ENCODE measurements at regions of chr12 and their contacts with region 1.

Region 1: GRCh38 chr12:78181544-78182162 is 351.0 kb downstream of the NAV3 start:
- DNase-seq: peak; percentile 73
- ATAC-seq: peak; percentile 62
- H3K4me3 ChIP-seq: no peak overlapping the region
- H3K27ac ChIP-seq: no peak overlapping the region
- H3K4me1 ChIP-seq: peaks cover 30% of the 10 kb centered on the region
- H3K27me3 ChIP-seq: no peaks in the 10 kb centered on the region
- CTCF ChIP-seq: peak; percentile 89

Region 2: DNA sequence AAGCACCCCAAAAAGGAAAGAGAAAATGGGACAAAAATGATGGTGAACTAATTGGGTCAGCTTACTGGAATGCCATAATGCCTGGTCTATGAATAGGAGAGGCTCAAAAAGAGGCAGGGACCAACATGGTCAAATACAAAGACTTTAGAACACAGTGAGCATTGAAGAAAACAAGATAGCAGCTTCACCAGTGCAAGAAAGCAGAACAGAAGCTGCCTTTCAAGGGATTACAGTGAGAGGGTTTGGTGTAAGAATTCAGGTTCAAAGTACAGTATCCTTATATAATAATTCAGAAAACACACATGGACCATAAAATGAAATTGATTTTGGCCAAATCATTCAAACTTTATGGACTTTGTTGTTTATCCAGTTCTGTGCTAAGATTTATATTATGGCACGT is 188.9 kb before region 1 on chr12:
- CTCF ChIA-PET with region 1: no interaction called
- POLR2A ChIA-PET with region 1: no interaction called
- intact Hi-C with region 1: no loop called
- DNase-seq: no peak
- ATAC-seq: no peak
- H3K4me3 ChIP-seq: no peak overlapping the region
- H3K27ac ChIP-seq: no peak overlapping the region
- H3K4me1 ChIP-seq: peaks cover 11% of the 10 kb centered on the region
- H3K27me3 ChIP-seq: no peaks in the 10 kb centered on the region
- CTCF ChIP-seq: no peak

Region 3: DNA sequence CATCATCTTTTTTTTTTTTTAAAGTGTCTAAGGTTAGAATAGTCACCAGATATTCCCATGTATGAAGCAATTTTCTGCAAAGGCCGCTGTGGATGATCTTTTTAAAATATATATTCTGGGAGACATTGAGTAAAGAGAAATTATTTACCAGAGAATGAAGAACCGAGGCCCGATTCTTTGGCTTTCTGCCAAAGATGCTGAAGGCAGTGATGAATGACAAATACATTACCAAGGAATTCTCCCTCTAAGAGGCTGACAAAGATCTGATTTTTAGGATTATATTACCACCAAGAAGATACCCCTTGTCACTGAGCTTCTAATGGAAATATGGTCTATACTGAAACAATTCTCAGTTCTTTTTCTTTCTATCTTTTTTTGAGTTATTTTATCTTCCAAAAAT is 14.1 kb before region 1 on chr12:
- CTCF ChIA-PET with region 1: no interaction called
- POLR2A ChIA-PET with region 1: no interaction called
- intact Hi-C with region 1: no loop called
- DNase-seq: peak; percentile 25
- ATAC-seq: no peak
- H3K4me3 ChIP-seq: no peak overlapping the region
- H3K27ac ChIP-seq: no peak overlapping the region
- H3K4me1 ChIP-seq: no peaks in the 10 kb centered on the region
- H3K27me3 ChIP-seq: no peaks in the 10 kb centered on the region
- CTCF ChIP-seq: no peak

Region 4: GRCh38 chr12:78204926-78205325 is 23.3 kb after region 1 on chr12:
- CTCF ChIA-PET with region 1: no interaction called
- POLR2A ChIA-PET with region 1: no interaction called
- intact Hi-C with region 1: no loop called
- DNase-seq: no peak
- ATAC-seq: no peak
- H3K4me3 ChIP-seq: no peak overlapping the region
- H3K27ac ChIP-seq: no peak overlapping the region
- H3K4me1 ChIP-seq: 0 out of 2 replicates have a peak, but pooled peaks cover 7% of the 10 kb centered on the region
- H3K27me3 ChIP-seq: no peaks in the 10 kb centered on the region
- CTCF ChIP-seq: no peak

Region 5: GRCh38 chr12:78328524-78328923 is 146.9 kb after region 1 on chr12:
- CTCF ChIA-PET with region 1: no interaction called
- POLR2A ChIA-PET with region 1: no interaction called
- intact Hi-C with region 1: no loop called
- DNase-seq: no peak
- ATAC-seq: no peak
- H3K4me3 ChIP-seq: no peak overlapping the region
- H3K27ac ChIP-seq: no peak overlapping the region
- H3K4me1 ChIP-seq: no peaks in the 10 kb centered on the region
- H3K27me3 ChIP-seq: no peaks in the 10 kb centered on the region
- CTCF ChIP-seq: no peak

Region 6: GRCh38 chr12:78392918-78393317 is 211.3 kb after region 1 on chr12:
- CTCF ChIA-PET with region 1: no interaction called
- POLR2A ChIA-PET with region 1: no interaction called
- intact Hi-C with region 1: loop called (anchors 1 kb)
- DNase-seq: peak; percentile 56
- ATAC-seq: peak; percentile 62; the same call in 1 of the 2 replicates
- H3K4me3 ChIP-seq: no peak overlapping the region
- H3K27ac ChIP-seq: no peak overlapping the region
- H3K4me1 ChIP-seq: 0 out of 2 replicates have a peak, but pooled peaks cover under 1% of the 10 kb centered on the region
- H3K27me3 ChIP-seq: no peaks in the 10 kb centered on the region
- CTCF ChIP-seq: peak; percentile 63

Region 7: GRCh38 chr12:78442454-78442801 is 260.8 kb after region 1 on chr12:
- CTCF ChIA-PET with region 1: no interaction called
- POLR2A ChIA-PET with region 1: no interaction called
- intact Hi-C with region 1: loop called (anchors 5 kb)
- DNase-seq: peak; percentile 19
- ATAC-seq: peak; percentile 29
- H3K4me3 ChIP-seq: peak overlapping the region; percentile 26; the same call in 1 of the 2 replicates
- H3K27ac ChIP-seq: peak overlapping the region; percentile 75
- H3K4me1 ChIP-seq: peaks cover 37% of the 10 kb centered on the region
- H3K27me3 ChIP-seq: no peaks in the 10 kb centered on the region
- CTCF ChIP-seq: no peak

Region 8: DNA sequence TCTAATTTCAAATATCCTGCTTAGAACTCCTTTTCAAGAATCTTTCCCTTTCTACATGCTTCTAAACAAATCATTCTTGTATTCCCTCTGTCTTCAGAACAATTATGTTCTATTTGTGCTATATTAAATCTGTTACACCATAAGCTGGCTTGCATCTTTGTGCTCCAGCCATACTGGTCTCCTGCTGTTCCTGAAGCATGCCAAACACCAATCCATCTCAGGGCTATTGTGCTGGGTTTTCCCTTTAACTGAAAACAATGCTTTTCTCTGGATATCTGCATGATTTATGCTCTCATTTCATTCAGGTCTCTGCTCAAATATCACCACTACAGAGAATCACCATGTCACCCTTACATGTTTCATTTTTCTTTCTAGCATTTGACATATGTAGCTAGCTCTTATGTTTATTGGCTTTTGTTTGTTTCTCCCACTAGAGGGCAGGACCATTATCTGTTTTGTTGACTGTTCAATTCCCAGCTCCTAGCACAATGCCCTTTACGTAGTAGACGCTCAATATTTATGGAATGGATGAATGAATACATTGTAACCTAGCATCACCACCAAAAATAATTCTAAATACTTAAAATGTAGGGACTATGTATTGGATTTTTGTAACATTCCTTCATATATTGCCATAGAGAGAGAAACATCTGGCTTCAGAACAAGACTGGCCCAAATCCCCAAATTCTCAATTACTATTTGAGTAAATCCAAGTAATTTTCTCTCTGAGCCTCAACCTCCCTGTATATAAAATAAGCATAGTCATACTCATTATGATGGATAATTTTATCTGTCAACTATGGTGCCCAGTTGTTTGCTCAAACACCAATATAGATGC is 380.9 kb after region 1 on chr12:
- CTCF ChIA-PET with region 1: no interaction called
- POLR2A ChIA-PET with region 1: no interaction called
- intact Hi-C with region 1: loop called (anchors 5 kb)
- DNase-seq: peak; percentile 44
- ATAC-seq: peak; percentile 55
- H3K4me3 ChIP-seq: no peak overlapping the region
- H3K27ac ChIP-seq: no peak overlapping the region
- H3K4me1 ChIP-seq: no peaks in the 10 kb centered on the region
- H3K27me3 ChIP-seq: no peaks in the 10 kb centered on the region
- CTCF ChIP-seq: peak; percentile 72

Region 9: DNA sequence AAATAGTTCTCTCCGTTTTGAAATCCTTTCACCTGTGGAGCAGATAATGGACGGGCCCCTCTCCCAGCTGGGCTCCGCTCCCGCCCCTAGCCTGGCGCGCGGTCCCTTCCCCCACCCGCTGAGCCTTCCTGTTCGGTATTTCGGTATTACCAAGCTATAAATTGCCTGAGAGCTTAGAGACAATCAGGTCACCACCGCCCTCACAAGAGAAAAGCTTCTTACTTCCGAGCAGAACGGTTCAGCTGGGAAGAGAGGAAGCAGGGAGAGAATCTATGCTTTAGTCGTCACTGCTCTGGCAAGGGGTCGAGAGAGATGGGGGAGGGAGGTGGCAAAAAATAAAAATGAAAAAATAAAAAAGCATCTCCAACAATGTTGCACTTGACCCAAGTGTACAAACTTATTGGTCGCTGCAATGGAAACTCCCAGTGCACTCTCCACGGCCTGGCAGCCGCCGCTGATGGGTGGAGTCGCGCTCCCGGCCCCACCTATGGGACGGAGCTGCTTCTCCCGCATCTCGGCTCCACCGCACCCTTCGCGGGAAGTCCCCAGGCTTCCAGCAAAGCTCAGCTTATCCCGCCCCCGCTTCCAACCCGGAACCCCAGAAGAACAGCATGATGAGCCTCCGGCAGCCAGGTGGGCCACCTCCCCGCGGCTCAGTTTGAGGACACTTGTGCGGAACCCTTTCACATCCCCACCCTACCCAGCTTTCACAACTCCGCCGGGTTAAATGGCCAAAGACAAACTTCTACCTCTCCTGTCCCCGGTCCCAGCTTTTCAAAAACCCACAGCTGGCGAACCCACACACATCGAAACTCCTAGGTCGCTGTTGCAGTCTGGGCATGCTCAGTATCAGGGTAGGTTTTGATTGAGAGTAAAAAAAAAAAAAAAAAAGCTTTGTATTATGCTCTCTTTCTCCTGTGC is 682.1 kb after region 1 on chr12:
- CTCF ChIA-PET with region 1: no interaction called
- POLR2A ChIA-PET with region 1: no interaction called
- intact Hi-C with region 1: loop called (anchors 2 kb)
- DNase-seq: peak; percentile 53
- ATAC-seq: peak; percentile 73
- H3K4me3 ChIP-seq: peak overlapping the region; percentile 79
- H3K27ac ChIP-seq: no peak overlapping the region
- H3K4me1 ChIP-seq: no peaks in the 10 kb centered on the region
- H3K27me3 ChIP-seq: peaks cover 6% of the 10 kb centered on the region
- CTCF ChIP-seq: no peak

Region 10: GRCh38 chr12:79174626-79175025 is 993.0 kb after region 1 on chr12:
- CTCF ChIA-PET with region 1: no interaction called
- POLR2A ChIA-PET with region 1: no interaction called
- intact Hi-C with region 1: loop called (anchors 1 kb)
- DNase-seq: peak; percentile 70
- ATAC-seq: peak; percentile 83
- H3K4me3 ChIP-seq: no peak overlapping the region
- H3K27ac ChIP-seq: no peak overlapping the region
- H3K4me1 ChIP-seq: no peaks in the 10 kb centered on the region
- H3K27me3 ChIP-seq: no peaks in the 10 kb centered on the region
- CTCF ChIP-seq: peak; percentile 62

Measured in PC-3 (cell line).